ENCODE measurements at regions of chr9 and their contacts with region 1.

Region 1: GRCh38 chr9:14383294-14383693 is 69.4 kb upstream of the NFIB start:
- DNase-seq: no peak
- H3K4me3 ChIP-seq: no peak overlapping the region
- H3K27ac ChIP-seq: no peak overlapping the region
- H3K4me1 ChIP-seq: no peaks in the 10 kb centered on the region
- H3K27me3 ChIP-seq: no peaks in the 10 kb centered on the region
- CTCF ChIP-seq: no peak
- POLR2A ChIP-seq: no peak

Region 2: DNA sequence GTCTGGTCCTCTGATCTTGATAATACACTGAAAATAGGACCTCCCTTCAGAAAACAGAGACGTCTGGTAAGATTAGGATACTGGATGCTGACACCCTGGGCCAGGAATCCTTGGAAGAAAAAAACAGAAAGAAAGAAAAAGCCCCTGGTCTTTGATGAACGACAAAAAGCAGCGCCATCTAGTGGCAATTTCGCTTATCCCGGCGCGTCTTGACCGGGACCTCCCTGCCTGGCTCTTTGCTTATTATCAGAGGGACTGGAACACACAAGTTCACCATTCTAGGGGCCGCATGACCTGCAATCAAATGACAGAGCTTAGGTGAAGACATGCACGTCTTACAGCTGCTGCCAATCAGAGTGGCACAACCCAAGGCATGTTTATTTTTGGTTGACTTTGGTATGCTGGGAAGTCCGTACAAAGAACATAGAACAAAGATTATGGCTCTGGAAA is 45.5 kb after region 1 on chr9:
- intact Hi-C with region 1: no loop called
- DNase-seq: no peak
- H3K4me3 ChIP-seq: no peak overlapping the region
- H3K27ac ChIP-seq: no peak overlapping the region
- H3K4me1 ChIP-seq: peaks cover 7% of the 10 kb centered on the region
- H3K27me3 ChIP-seq: no peaks in the 10 kb centered on the region
- CTCF ChIP-seq: peak; percentile 19 to 66 (median 28)
- POLR2A ChIP-seq: no peak

Region 3: DNA sequence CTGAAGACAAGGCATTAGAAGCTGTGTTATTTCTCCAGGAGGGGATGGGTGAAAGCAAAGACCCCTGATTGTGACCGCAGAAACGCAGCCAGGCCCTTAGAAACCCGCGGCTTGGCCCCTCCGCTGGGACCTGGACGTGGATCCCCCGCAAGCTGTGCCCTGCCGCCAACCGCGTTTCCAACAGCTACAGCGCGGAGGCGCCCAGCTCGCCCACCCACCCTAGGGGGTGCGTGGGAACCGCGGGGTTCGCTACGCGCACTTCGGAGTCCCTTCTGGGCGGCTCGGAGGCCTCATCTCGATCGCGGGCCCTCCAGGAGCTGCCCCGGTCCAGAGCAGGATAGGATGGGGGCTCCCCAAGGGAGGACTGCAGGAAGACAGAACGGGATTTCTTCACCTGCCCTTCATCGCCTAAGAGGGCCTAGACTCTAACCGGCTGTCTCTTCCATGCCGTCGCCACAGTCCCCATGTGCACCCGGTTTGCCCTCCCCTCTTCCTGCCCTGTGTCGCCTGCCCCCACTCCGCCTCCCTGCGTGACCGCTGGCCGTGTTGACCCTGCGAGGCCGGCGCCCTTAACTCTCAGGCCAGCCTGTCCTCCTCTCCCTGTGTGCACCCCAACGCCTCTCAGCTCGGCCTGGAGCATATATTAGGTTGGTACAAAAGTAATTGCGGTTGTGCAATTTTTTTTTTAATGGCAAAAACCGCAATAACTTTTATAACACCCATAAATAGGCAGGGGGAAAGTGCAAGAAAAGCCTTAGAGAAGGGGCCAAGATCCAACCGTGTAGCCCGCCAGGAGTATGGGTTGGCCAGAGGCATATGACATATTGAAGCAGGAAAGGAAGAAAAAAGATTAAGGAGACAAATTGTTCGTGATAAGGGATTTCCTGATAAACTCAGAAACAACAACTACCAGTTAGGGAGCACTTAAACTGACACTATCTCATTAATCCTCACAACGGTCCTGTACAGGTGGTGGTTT is 595.0 kb after region 1 on chr9:
- intact Hi-C with region 1: no loop called
- DNase-seq: no peak
- H3K4me3 ChIP-seq: no peak overlapping the region
- H3K27ac ChIP-seq: no peak overlapping the region
- H3K4me1 ChIP-seq: no peaks in the 10 kb centered on the region
- H3K27me3 ChIP-seq: no peaks in the 10 kb centered on the region
- CTCF ChIP-seq: no peak
- POLR2A ChIP-seq: no peak

Region 4: GRCh38 chr9:16085167-16085726 is 1702.0 kb after region 1 on chr9:
- intact Hi-C with region 1: loop called (anchors 10 kb)
- DNase-seq: peak in 1 of 2 donors; percentile 87
- H3K4me3 ChIP-seq: no peak overlapping the region
- H3K27ac ChIP-seq: no peak overlapping the region
- H3K4me1 ChIP-seq: no peaks in the 10 kb centered on the region
- H3K27me3 ChIP-seq: no peaks in the 10 kb centered on the region
- CTCF ChIP-seq: no peak
- POLR2A ChIP-seq: no peak